ENCODE measurements at regions of chr17 and their contacts with region 1.

Region 1: GRCh38 chr17:50865984-50866774 is at the start of gene TOB1:
- DNase-seq: peak; percentile 98
- H3K4me3 Mint-ChIP-seq: peak within 1 kb of the TSS; percentile 97
- H3K27ac Mint-ChIP-seq: peak within 1 kb of the TSS; percentile 96
- H3K4me1 Mint-ChIP-seq: peaks cover 45% of the 10 kb centered on the region
- H3K27me3 Mint-ChIP-seq: no peaks in the 10 kb centered on the region
- total RNA-seq, gene TOB1: 29.0 and 30.1 TPM in 2 replicates

Region 2: GRCh38 chr17:49677933-49678847 is 1188.0 kb before region 1 on chr17 and contains the start of gene SPOP:
- intact Hi-C with region 1: loop called (anchors 5 kb)
- DNase-seq: peak; percentile 100
- H3K4me3 Mint-ChIP-seq: peak within 1 kb of the TSS; percentile 95
- H3K27ac Mint-ChIP-seq: peak within 1 kb of the TSS; percentile 99
- H3K4me1 Mint-ChIP-seq: peaks cover 44% of the 10 kb centered on the region
- H3K27me3 Mint-ChIP-seq: peaks cover 7% of the 10 kb centered on the region
- total RNA-seq, gene SPOP: 56.0 and 61.4 TPM in 2 replicates

Region 3: DNA sequence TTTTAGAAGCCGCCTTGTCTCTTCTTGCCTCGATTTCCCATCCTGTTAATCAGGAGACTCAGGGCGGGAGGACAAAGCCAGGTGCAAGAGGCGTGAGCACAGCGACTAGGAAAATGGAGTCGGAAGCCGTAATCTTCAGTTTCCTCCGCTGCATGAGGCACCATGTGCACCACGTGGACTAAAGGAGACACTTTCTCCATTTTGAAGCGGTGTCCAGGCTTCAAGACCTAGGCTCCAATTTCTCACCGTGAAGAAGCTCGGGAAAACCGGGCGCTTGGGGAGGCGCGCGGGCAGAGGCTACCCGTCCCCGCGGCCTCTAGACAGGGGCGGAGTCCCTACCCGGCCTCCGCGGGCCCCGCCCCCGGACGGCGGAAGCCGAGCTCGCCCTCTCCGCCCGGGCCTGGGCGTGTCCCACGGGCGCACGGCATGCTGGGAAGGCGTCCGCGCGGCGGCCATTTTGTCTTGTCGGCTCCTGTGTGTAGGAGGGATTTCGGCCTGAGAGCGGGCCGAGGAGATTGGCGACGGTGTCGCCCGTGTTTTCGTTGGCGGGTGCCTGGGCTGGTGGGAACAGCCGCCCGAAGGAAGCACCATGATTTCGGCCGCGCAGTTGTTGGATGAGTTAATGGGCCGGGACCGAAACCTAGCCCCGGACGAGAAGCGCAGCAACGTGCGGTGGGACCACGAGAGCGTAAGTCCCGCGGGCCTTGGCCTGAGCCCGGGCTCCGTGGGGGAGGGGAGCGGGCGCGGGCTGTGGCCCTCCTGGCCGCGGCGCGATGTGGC is 146.8 kb before region 1 on chr17 and contains the start of gene LUC7L3:
- intact Hi-C with region 1: loop called (anchors 2 kb)
- DNase-seq: peak; percentile 99
- H3K4me3 Mint-ChIP-seq: peak within 1 kb of the TSS; percentile 82
- H3K27ac Mint-ChIP-seq: peak within 1 kb of the TSS; percentile 99
- H3K4me1 Mint-ChIP-seq: peaks cover 10% of the 10 kb centered on the region
- H3K27me3 Mint-ChIP-seq: no peaks in the 10 kb centered on the region
- total RNA-seq, gene LUC7L3: 125 and 133 TPM in 2 replicates

Region 4: DNA sequence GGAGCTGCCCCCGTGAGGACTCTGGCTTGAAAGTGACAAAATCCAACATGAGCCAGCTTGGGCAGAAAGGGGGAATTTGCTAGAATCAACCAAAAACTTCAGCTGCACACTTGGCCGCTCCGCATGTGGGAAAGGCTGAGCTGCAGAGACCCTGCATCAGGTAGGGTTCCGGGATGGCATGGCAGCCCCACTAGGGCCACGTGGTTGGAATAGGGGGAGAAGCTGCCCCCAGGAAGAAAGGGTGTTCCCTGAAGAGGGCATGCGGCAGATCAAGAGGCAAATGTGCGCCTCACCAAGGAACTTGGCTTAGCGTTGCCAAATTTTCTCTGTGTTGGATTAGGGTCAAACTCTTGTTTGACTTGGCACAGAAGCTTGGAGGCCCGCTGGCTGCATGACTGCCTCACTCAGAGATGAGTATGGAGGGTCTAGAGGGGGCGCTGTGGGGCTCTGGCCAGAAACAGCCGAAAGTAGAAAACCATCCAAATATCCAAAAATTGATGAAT is 60.0 kb before region 1 on chr17:
- intact Hi-C with region 1: no loop called
- DNase-seq: no peak
- H3K4me3 Mint-ChIP-seq: no peak overlapping the region
- H3K27ac Mint-ChIP-seq: no peak overlapping the region
- H3K4me1 Mint-ChIP-seq: no peaks in the 10 kb centered on the region
- H3K27me3 Mint-ChIP-seq: peaks cover 2% of the 10 kb centered on the region

Region 5: DNA sequence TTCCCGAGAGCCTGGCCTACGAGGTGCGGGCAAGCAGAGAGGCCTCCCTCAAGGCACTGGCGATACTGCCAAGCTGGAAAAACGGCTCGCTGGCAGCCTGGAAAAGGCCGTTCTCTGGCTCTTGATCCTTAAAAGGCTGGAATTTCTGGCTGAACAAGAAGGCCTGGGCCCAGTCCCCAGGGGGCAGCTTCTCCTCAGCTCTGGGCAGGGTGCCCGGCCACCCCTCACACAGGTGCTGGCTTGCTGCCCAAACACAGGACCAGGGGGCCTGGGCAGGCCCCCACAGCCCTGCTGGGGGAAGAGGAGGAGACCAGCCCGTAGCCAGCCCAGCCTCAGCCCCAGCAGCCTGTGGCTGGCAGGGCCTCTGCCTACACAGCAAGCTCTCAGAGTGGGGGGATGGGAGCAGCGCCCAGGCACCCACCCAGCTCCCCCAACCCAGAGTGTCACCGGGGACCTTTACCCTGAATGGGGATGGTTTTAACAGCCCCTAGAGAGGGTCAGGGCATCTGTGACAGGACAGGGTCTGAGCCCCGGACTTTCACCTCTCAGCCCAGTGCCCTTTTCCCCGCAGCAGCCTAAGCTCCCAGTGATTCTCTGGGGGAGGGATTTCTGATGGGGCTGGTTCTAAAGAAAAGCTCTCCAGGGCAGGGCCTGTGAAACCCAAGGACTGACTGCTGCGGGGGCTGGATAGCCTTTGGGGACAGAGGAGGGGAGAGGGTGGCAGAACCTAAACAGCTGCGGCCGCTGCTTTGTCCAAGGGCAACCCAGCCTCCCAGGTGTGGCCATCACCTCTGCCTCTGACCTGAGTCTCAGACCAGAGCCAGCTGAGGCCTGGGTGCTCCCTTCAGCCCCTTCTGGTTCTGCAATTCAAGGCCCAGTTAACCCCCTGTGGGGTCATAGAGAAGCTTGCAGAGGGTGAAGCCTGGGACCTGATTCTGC is 38.6 kb after region 1 on chr17:
- intact Hi-C with region 1: loop called (anchors 5 kb)
- DNase-seq: no peak
- H3K4me3 Mint-ChIP-seq: no peak overlapping the region
- H3K27ac Mint-ChIP-seq: no peak overlapping the region
- H3K4me1 Mint-ChIP-seq: peaks cover 39% of the 10 kb centered on the region
- H3K27me3 Mint-ChIP-seq: no peaks in the 10 kb centered on the region

Region 6: DNA sequence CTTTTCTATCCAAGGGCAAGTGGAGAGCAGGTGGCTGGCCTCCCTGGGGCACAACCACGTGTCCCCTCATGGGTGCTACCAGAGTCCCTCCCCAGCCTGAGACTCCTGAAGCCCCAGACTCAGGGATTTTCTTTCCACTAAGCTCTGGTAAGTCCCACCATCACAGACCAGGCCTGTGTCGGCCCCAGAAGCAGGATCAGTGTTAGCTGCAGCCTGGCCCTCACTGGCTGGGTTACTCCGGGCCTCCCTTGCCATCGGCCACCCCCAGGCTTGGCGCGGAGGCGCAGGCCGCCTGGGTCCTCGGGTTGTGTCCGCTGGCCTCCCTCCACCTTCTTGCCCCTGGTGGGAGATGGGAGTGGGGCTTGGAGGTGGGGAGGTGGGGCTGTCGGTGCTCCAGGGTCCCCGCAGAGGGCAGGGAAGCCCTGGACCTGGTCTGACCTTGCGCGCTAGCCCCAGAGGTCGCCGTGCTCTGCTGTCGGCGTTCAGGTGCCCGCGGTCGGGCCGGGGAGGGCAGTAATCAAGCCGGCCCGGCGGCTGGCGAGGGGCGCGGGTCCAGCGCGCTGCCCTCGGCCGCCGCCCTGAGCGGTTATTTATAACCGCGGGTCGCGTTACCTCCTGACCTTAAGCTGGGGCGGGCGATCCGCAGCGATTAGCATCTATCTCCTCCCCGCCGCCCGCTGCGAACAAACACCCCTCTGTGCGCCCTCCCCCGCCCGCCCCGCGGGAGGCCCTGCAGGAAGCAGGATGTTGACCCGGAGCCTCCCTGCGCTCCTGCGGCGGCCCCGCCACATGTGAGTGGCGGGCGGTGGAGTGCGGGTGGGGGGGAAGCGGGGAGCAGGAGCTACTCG is 78.1 kb after region 1 on chr17:
- intact Hi-C with region 1: loop called (anchors 2 kb)
- DNase-seq: peak; percentile 94
- H3K4me3 Mint-ChIP-seq: peak overlapping the region; percentile 80
- H3K27ac Mint-ChIP-seq: peak overlapping the region; percentile 86
- H3K4me1 Mint-ChIP-seq: peaks cover 24% of the 10 kb centered on the region
- H3K27me3 Mint-ChIP-seq: no peaks in the 10 kb centered on the region

Region 7: DNA sequence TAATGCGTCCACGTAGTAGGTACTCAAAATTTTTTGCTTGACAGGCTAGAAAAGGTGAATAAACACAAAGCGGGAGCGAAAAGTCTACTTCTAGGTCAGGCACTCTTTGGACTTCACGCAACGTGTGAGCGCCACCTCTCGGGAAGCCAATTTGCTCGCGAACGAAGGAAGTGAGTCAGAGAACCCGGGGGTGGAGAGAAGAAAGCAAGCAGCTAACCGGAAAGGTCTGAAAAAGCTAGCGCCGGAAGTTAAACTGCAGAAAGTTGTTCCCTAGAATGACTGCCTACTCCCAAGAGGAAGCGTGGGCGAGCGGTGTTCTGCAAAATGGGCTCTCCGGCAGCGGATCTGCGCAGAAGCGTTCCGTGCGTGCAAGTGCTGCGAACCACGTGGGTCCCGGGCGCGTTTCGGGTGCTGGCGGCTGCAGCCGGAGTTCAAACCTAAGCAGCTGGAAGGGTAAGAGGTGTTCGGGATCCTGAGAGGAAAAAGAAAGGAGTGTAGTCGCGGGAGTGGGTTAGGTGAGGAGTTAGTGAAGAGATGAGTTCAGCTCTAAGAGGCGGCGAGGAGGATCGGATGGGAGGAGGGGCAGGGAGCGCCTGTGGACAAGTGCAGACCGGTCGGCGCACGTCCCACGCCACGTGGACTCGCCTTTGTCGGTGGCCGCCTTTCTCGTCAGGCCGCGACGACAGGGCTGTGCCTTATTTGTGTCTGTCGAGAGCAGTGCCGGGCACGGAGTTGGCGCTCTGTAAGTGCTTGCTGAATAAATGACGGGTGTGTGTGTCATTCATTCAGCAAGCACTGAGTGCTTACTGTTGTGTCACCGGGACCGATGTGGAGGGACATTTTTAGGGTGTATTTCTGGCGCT is 287.3 kb after region 1 on chr17 and contains the start of gene NME1:
- intact Hi-C with region 1: loop called (anchors 2 kb)
- DNase-seq: peak; percentile 100
- H3K4me3 Mint-ChIP-seq: no peak within 1 kb of the TSS
- H3K27ac Mint-ChIP-seq: no peak within 1 kb of the TSS
- H3K4me1 Mint-ChIP-seq: peaks cover 23% of the 10 kb centered on the region
- H3K27me3 Mint-ChIP-seq: no peaks in the 10 kb centered on the region
- total RNA-seq, gene NME1: 447 and 455 TPM in 2 replicates

Measured in activated CD4-positive, alpha-beta T cell treated with anti-CD3 and anti-CD28 coated beads, Interleukin-2, amount 10 ng/mL, durations not matched to agents 24 days and 14 days (primary cell).